ENCODE measurements at regions of chr5 and their contacts with region 1.

Region 1: DNA sequence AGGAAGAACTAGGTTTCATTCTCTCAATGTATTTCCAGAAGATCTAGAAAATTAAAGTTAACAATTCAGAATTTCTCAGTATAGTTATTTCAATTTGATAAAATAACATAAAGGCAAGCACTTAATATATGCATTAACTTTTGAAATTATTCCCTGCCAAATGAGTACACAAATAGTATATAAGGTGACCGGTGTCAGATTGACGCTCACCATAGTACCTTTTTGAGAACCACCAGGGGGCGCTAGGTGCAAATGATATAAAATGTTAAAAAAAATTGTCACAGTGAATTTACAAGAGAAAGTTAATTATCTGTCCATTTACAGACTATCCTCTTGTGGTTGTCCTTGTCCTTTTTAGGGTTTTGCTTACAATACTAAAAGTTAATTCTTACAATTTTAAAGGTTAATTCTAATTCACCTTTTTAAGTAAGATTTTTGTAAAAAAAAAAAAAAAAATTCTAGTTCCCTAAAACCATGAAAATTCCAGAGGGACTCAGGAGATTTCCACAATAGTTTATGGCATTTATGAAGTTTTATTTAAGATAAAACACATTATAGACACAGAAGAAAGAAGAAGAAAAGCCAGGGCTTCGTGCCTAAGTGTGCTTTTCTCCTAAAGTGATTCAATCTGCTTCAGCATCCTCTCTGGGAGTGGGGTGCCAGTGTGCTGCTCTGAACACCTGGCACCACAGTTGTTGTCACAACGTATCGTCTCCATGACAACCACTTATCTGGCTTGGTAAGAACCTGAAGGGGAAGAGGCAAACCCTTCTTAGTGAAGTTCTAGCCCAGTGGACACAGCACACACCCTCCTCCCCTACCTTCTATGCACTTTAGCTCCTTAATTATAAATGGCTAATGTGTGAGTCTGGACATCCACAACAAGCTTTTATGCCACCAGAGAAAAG is 1.7 kb downstream of the ADAMTS16 start:
- DNase-seq: no peak
- H3K4me3 ChIP-seq: no peak overlapping the region
- H3K27me3 ChIP-seq: peaks cover 14% of the 10 kb centered on the region
- CTCF ChIP-seq: peak; percentile 52

Region 2: GRCh38 chr5:5025775-5026406 is 116.0 kb before region 1 on chr5:
- CTCF ChIA-PET with region 1: no interaction called
- POLR2A ChIA-PET with region 1: no interaction called
- DNase-seq: no peak
- H3K4me3 ChIP-seq: no peak overlapping the region
- H3K27me3 ChIP-seq: no peaks in the 10 kb centered on the region
- CTCF ChIP-seq: no peak

Region 3: DNA sequence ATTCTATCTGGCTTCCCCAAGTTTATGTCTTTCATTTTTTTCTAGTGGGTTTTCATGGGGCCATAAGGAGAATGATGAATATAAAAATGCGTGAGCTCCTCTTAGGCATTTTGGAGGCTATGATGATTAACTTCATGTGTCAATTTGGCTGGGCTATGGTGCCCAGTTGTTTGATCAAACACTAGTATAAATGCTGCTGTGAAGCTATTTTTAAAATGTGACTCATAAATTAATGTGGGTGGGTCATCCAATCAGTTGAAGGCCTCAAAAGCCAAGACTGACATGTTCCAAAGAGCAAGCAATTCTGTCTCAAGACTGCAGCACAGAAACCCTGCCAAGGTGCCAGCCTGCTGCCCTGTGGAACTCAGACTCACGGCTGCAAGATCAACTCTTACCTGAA is 256.2 kb after region 1 on chr5:
- CTCF ChIA-PET with region 1: interaction called, 49 read pairs
- POLR2A ChIA-PET with region 1: no interaction called
- DNase-seq: no peak
- H3K4me3 ChIP-seq: no peak overlapping the region
- H3K27me3 ChIP-seq: no peaks in the 10 kb centered on the region
- CTCF ChIP-seq: no peak

Region 4: GRCh38 chr5:5421961-5422818 is 280.3 kb after region 1 on chr5 and contains the start of gene ICE1:
- CTCF ChIA-PET with region 1: interaction called, 18 read pairs
- POLR2A ChIA-PET with region 1: no interaction called
- DNase-seq: peak; percentile 73
- H3K4me3 ChIP-seq: peak within 1 kb of the TSS; percentile 57
- H3K27me3 ChIP-seq: no peaks in the 10 kb centered on the region
- CTCF ChIP-seq: peak; percentile 11; the same call in 1 of the 2 replicates
- polyA plus RNA-seq, gene ICE1: 10.2 and 15.1 TPM in 2 replicates

Measured in BJ (cell line).